Left lung (tissue), 14 donors: ENCODE measurements at regions of chr12 and their contacts with region 1.

Region 1: GRCh38 chr12:113048716-113049127 is 7.8 kb upstream of the DTX1 start:
- DNase-seq: peak in 2 of 4 donors; percentile 35 to 73
- ATAC-seq: peak; percentile 96
- H3K4me3 ChIP-seq: no peak overlapping the region
- H3K27ac ChIP-seq: no peak overlapping the region
- H3K4me1 ChIP-seq: no peaks in the 10 kb centered on the region
- H3K27me3 ChIP-seq: peaks cover 0 to 34% of the 10 kb centered on the region in 2 donors
- CTCF ChIP-seq: peak; percentile 77 to 81

Region 2: DNA sequence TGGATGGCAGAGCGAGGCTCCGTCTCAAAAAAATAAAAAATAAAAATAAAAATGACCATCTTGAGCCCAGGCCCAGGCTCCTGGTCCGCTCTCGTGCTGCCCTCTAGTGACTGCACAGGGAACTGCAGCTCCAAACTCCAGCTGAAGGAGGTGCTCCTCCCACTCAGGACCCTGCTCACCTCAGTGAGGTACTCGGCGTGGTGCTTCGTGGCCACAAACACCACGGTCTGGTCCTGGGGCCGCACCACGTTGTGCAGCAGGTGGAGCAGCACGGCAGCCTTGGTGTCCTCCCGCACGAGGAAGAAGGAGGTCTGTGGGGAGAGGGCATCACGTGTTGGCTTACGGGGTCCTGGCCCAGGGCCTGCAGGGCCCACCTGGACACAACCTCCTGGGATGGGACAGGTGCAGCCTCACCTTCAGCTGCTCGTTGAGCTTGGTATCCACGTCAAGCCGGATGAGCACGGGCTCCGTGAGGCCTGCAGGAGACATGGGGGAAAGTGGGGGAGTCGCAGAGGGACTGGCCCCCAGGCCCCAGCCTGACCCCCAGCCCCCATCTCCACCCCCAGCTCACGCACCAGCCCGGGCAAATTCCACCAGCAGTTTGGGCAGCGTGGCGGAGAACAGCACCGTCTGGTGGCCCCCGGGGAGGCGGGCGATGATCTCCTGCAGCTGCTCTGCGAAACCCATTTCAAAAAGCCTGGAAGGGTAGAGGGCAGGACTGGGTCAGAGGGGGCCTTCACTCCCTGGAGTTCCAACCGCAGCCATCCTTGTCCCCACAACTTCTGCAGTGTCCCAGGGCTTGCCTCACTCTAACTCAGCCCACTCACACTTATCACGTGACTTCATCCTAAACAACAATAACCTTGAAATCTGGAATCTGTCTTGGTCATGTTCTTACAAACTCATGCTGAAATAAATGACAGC is 126.0 kb after region 1 on chr12:
- intact Hi-C with region 1: loop called in 1 of 2 experiments (anchors 5 kb)
- DNase-seq: peak; percentile 49 to 89 (median 70)
- ATAC-seq: peak; percentile 96
- H3K4me3 ChIP-seq: no peak overlapping the region
- H3K27ac ChIP-seq: no peak overlapping the region
- H3K4me1 ChIP-seq: no peaks in the 10 kb centered on the region
- H3K27me3 ChIP-seq: no peaks in the 10 kb centered on the region
- CTCF ChIP-seq: peak; percentile 97 to 98